ENCODE measurements at regions of chr9 and their contacts with region 1.

Region 1: GRCh38 chr9:113876151-113876992 is at the start of gene ZNF618:
- DNase-seq: no peak
- H3K4me3 ChIP-seq: peak within 1 kb of the TSS; percentile 95 to 100 (median 96)
- H3K27ac ChIP-seq: peak within 1 kb of the TSS; percentile 83 to 91
- H3K4me1 ChIP-seq: peaks cover 0 to 3% of the 10 kb centered on the region in 2 donors
- H3K27me3 ChIP-seq: no peaks in the 10 kb centered on the region
- CTCF ChIP-seq: no peak
- POLR2A ChIP-seq: no peak
- total RNA-seq, gene ZNF618: 4.6 to 11.8 (median 10.4) TPM

Region 2: GRCh38 chr9:113682297-113682771 is 194.0 kb before region 1 on chr9:
- intact Hi-C with region 1: loop called (anchors 2 kb)
- DNase-seq: peak; percentile 34 to 76
- H3K4me3 ChIP-seq: no peak overlapping the region
- H3K27ac ChIP-seq: no peak overlapping the region
- H3K4me1 ChIP-seq: no peaks in the 10 kb centered on the region
- H3K27me3 ChIP-seq: no peaks in the 10 kb centered on the region
- CTCF ChIP-seq: peak; percentile 72 to 82 (median 77)
- POLR2A ChIP-seq: no peak

Measured in breast epithelium (tissue), 4 donors.